Heart right ventricle (tissue), 16 donors: ENCODE measurements at regions of chr1 and their contacts with region 1.

Region 1: DNA sequence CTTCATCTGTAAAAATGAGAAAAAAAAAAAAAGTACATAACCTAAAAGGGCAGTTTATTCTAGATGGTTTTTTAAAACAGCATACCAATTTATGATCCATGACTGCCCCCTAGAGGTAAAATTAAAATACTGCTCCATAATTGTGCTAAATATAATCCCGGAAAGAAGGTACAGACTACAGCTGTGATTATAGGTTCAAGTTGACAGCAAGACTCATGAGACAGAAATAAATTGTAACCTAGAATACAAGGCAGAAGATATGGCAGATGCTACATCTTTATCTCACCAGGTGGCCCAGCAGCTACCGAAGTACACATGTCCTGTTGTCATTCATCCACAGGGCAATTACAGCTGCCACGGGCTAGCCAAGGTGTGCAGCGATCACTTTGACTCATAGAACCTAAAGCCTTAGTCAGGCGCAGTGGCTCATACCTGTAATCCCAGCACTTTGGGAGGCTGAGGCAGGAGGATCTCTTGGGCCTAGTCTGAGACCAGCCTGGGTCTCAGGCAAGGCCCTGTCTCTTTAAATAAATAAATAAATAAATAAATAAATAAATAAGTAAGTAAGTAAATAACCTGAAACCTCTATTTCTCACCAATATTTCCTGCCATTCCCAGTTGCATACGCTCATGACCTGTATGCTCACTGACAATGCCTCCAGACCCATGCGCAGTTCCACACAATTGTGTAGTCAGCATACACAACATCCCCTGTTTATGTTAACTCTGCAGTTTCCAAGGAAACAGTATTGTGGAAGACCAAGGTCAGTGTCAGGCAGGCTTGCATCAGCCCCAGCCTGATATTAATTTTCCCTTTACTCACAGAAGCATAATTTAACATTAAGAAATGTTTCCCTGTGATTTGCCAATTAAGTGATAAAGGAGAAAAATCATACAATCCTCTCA is 18.3 kb upstream of the PPIE start:
- DNase-seq: no peak
- ATAC-seq: peak in 5 of 8 donors; percentile 47 to 72 (median 59)
- H3K4me3 ChIP-seq: no peak overlapping the region
- H3K27ac ChIP-seq: no peak overlapping the region
- H3K4me1 ChIP-seq: peaks cover 0 to 4% (median 0%) of the 10 kb centered on the region in 9 donors
- H3K27me3 ChIP-seq: peaks cover 0 to 51% (median 30%) of the 10 kb centered on the region in 7 donors
- CTCF ChIP-seq: peak; percentile 56 to 82 (median 73)

Region 2: DNA sequence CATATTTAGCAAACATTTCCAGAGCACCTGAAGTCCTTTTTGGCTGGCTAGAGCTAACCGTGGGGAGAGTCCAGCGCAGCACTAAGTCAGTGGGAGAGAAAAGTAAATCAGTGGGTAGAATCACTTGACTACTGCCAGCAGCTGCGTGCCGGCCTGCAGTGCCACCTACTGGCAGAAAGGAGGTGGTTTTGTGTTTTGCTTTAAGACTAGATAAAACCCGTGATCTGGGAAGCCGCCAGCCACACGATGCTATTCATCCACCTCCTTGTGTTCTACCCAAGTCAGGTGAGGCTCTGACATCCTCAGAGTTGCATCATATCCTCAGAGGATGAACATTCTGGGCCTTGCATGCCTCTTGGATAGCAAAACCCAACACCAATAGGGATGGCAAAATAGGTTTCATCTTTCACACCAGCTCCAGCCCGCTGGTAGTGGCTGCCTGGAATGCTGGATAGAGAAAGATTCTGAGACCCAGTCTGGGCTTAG is 66.8 kb before region 1 on chr1:
- intact Hi-C with region 1: loop called in 1 of 10 experiments (anchors 5 kb)
- DNase-seq: peak; percentile 74 to 82
- ATAC-seq: peak; percentile 58 to 77 (median 64)
- H3K4me3 ChIP-seq: peak overlapping the region in 1 of 10 donors; percentile 10
- H3K27ac ChIP-seq: peak overlapping the region in 3 of 10 donors; percentile 66 to 76 (median 72)
- H3K4me1 ChIP-seq: peaks cover 7 to 67% (median 22%) of the 10 kb centered on the region in 9 donors
- H3K27me3 ChIP-seq: peaks cover 0 to 11% (median 0%) of the 10 kb centered on the region in 7 donors
- CTCF ChIP-seq: peak; percentile 87 to 96 (median 92)